Heart right ventricle (tissue), 16 donors: ENCODE measurements at regions of chr10 and their contacts with region 1.

Region 1: DNA sequence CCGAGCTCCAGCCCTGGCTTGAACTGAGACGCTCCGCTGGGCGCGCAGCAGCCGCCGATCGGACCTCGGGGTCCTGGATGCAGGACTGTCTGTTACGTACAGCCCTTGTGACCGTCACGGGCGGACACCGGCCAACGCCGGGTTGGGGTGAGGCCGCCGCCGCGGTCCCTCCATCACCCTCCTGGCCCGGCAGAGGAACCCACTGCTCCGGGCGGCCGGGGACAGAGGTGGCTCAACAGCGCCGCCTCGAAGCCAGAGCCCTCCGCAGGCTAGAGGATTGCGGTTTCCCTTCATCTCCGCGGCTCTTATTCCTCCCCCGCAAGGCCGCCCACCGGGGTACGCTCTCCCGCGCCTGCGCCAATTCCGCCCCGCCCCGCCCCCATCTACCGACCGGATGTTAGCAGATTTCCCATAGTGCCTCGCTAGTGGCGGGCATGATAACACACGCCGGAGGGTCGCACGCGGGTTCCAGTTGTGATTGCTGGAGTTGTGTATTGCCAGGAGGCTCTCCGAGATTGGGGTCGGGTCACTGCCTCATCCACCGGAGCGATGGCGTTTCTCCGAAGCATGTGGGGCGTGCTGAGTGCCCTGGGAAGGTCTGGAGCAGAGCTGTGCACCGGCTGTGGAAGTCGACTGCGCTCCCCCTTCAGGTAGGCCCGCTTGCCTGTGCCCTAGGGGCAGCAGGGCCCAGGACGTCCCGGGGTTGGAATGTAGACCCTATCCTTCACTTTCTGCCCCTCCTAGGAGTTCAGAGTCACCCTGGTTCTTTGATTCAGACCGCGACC is at the start of gene TFAM:
- DNase-seq: peak; percentile 97 to 98
- ATAC-seq: peak; percentile 97 to 100 (median 99)
- H3K4me3 ChIP-seq: peak within 1 kb of the TSS; percentile 56 to 98 (median 85)
- H3K27ac ChIP-seq: peak within 1 kb of the TSS; percentile 57 to 98 (median 93)
- H3K4me1 ChIP-seq: peaks cover 0 to 34% (median 22%) of the 10 kb centered on the region in 9 donors
- H3K27me3 ChIP-seq: no peaks in the 10 kb centered on the region
- CTCF ChIP-seq: peak in 6 of 9 donors; percentile 52 to 74 (median 58)
- total RNA-seq, gene TFAM: 23.7 to 36.5 (median 31.5) TPM

Region 2: DNA sequence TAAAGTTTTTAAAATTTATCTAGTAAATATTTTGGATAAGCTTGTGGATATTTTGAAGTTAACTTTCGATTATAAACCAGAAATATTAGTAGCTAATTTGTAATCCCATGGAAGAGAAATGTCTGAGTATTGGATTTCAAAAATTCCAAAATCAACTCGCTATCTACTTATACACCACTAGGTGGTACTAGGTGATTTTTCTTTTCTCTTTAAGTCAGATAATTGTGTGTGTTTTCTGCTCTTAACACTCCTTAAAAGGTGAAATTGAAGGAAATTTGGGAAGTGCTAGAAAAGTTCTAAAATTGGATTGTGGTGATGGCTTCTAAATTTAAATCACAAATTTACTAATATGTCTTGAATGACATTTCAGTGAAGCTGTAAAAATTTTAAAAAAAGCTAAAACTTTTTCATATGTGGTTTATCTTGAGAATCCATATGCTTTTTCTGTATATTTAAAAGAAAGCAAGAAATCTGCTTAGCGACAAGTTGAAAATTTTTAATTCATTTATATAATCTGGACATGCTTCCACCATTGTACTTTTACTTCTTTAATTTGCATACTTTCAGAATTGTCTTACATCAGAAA is 207.7 kb before region 1 on chr10:
- intact Hi-C with region 1: loop called in 4 of 10 experiments (anchors 5 to 10 kb)
- DNase-seq: no peak
- ATAC-seq: no peak
- H3K4me3 ChIP-seq: no peak overlapping the region
- H3K27ac ChIP-seq: no peak overlapping the region
- H3K4me1 ChIP-seq: no peaks in the 10 kb centered on the region
- H3K27me3 ChIP-seq: no peaks in the 10 kb centered on the region
- CTCF ChIP-seq: peak; percentile 40 to 77 (median 70)

Region 3: DNA sequence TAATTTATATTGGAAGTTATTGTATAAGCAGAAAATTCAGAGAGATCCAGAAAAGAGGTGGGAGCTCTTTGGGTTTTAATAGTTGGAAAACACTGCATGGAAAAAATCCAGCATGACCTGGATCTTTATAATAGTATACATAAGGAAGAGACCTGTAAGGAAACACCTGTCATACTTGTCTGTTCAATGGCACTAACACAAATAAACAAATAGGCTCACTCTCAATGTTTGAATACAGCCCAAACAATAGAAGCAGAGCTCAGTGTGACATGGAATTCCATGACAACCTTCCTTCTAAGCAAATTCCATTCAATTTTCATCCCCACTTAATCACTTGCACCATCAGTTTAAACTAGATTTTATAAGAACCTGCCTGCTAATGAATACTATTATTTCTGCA is 84.5 kb before region 1 on chr10:
- intact Hi-C with region 1: loop called in 3 of 10 experiments (anchors 5 to 10 kb)
- DNase-seq: no peak
- ATAC-seq: no peak
- H3K4me3 ChIP-seq: no peak overlapping the region
- H3K27ac ChIP-seq: no peak overlapping the region
- H3K4me1 ChIP-seq: peaks cover 0 to 5% (median 0%) of the 10 kb centered on the region in 9 donors
- H3K27me3 ChIP-seq: peaks cover 0 to 28% (median 0%) of the 10 kb centered on the region in 7 donors
- CTCF ChIP-seq: no peak

Region 4: DNA sequence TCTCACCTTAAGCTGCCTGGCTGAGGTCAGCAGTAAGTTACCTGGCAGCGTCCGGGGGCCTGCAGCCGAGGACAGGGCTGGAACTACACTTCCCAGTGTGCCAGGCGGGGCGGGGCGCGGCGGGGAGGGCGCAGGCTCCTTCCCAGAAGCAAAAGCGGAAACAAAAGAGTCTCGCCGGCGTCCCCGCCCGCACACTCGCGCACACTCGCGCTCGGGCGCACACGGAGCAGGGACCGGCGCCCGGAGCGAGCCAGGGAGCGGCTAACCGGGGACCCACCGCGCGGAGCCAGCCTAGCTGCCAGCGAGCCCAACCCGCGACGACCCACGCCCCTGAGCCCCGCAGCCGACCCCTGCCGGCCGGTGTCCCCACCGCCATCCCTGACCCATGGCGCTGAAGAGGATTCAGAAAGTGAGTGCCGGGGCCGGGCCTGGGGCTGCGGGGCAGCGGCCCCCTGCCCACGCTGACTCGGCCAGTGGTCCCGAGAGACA is 50.3 kb before region 1 on chr10 and contains the start of gene UBE2D1:
- intact Hi-C with region 1: loop called (anchors 1 to 10 kb)
- DNase-seq: peak; percentile 91 to 93
- ATAC-seq: peak; percentile 96 to 98 (median 97)
- H3K4me3 ChIP-seq: peak within 1 kb of the TSS; percentile 80 to 98 (median 91)
- H3K27ac ChIP-seq: peak within 1 kb of the TSS; percentile 86 to 96 (median 94)
- H3K4me1 ChIP-seq: peaks cover 0 to 50% (median 20%) of the 10 kb centered on the region in 9 donors
- H3K27me3 ChIP-seq: no peaks in the 10 kb centered on the region
- CTCF ChIP-seq: peak in 4 of 9 donors; percentile 15 to 38 (median 25)
- total RNA-seq, gene UBE2D1: 42.6 to 71.0 (median 62.0) TPM